ENCODE measurements at regions of chr12 and their contacts with region 1.

Region 1: DNA sequence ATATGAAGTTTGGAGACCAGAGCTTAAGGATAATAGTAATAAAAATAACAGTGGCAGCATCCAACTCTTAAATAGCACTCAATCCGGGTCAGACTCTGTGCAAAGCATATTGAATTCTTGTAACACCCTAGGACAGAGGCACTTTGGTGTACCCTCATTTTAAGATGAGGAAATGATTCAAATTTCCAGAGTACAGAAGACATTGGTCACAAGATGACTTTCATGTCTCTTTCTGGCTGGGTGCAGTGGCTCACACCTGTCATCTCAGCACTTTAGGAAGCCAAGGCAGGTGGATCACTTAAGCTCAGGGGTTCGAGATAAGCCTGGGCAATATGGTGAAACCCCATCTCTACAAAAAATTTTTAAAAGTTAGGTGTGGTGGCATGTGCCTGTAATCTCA is 235.8 kb downstream of the SLC15A4 start:
- DNase-seq: no peak
- H3K4me3 ChIP-seq: no peak overlapping the region
- H3K27ac ChIP-seq: no peak overlapping the region
- H3K4me1 ChIP-seq: no peaks in the 10 kb centered on the region
- H3K27me3 ChIP-seq: no peaks in the 10 kb centered on the region
- CTCF ChIP-seq: no peak
- EP300 ChIP-seq: no peak
- POLR2A ChIP-seq: no peak

Region 2: DNA sequence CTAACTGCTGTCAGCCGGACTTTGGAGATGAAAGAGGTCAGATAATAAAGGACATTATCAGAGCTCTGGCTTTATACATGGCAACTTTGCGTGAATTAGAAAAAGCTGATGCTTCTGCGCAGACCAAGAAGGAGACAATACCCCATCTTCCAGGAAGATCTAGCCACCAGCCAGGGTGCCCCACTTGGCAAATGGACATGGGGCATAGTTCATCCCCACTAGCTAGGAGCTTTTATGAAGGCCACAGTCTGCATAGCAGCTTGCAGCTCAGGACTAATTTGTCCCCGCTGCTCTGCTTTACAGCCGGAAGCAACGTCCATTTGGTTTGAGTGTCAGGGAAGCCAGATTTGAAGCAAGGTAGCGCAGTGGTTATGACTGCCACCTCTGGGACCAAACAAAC is 220.0 kb before region 1 on chr12:
- intact Hi-C with region 1: no loop called
- DNase-seq: no peak
- H3K4me3 ChIP-seq: no peak overlapping the region
- H3K27ac ChIP-seq: no peak overlapping the region
- H3K4me1 ChIP-seq: peaks cover 0 to 13% (median 0%) of the 10 kb centered on the region in 4 donors
- H3K27me3 ChIP-seq: peaks cover 0 to 44% (median 0%) of the 10 kb centered on the region in 3 donors
- CTCF ChIP-seq: no peak
- EP300 ChIP-seq: no peak
- POLR2A ChIP-seq: no peak

Region 3: GRCh38 chr12:128644664-128645296 is 56.9 kb after region 1 on chr12:
- intact Hi-C with region 1: loop called (anchors 2 kb)
- DNase-seq: peak; percentile 40 to 62
- H3K4me3 ChIP-seq: no peak overlapping the region
- H3K27ac ChIP-seq: no peak overlapping the region
- H3K4me1 ChIP-seq: no peaks in the 10 kb centered on the region
- H3K27me3 ChIP-seq: no peaks in the 10 kb centered on the region
- CTCF ChIP-seq: peak in 3 of 7 experiments; percentile 27 to 39 (median 38)
- EP300 ChIP-seq: no peak
- POLR2A ChIP-seq: no peak